RWPE1 (cell line): ENCODE measurements at regions of chr9 and their contacts with region 1.

Region 1: GRCh38 chr9:132507746-132508469 is 74.5 kb upstream of the BARHL1 start:
- DNase-seq: peak; percentile 95
- H3K27ac ChIP-seq: no peak overlapping the region
- CTCF ChIP-seq: peak; percentile 96

Region 2: DNA sequence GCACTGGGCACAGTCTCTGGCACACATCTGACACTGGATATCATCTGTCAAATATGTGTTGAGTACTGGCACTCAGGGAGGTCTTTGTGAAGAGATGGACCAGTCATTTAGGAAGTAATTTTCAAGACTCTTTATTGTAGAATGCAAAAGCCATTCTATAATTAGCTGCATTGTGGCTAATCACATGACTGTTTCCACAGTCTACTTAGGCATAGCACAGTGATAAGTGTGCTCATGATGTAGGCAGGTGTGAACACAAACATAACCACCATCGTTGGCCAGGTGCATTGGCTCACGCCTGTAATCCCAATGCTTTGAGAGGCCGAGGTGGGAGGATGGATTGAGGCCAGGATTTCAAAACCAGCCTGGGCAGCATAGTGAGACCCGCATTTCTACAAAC is 35.7 kb before region 1 on chr9:
- CTCF ChIA-PET with region 1: no interaction called
- POLR2A ChIA-PET with region 1: no interaction called
- DNase-seq: no peak
- H3K27ac ChIP-seq: no peak overlapping the region
- CTCF ChIP-seq: no peak

Region 3: DNA sequence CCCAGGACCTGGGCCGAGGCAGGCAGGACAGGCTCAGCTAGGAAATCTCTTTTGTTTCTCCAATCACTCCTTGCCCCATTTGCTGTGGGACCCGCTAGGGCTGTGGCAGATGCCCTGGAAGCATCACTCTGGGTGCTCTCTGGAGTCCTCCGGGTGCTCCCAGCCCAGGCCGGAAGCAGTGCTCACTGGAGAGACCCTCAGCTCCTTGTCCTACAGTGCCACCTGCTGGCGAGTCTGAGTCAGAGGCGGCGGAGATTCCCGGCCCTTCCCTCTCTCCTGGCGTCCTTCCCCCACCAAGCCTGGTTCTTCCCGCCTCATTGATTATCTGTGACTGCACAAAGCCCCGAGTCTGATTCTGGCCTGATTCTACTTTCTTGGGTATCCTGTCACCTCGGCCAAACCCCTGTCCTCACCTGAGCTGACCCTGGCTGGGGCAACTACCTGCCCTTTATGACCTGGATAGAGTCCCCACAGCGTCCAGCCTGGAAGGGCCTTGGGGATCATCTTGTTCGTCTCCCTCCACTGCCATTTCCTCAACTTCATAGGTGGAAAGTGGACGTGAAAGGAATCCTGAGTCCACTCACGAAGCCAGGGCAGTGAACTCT is 67.2 kb after region 1 on chr9:
- CTCF ChIA-PET with region 1: interaction called, 30 read pairs
- POLR2A ChIA-PET with region 1: no interaction called
- DNase-seq: peak; percentile 87
- H3K27ac ChIP-seq: no peak overlapping the region
- CTCF ChIP-seq: peak; percentile 92

Region 4: GRCh38 chr9:132694157-132694556 is 186.2 kb after region 1 on chr9:
- CTCF ChIA-PET with region 1: no interaction called
- POLR2A ChIA-PET with region 1: no interaction called
- DNase-seq: no peak
- H3K27ac ChIP-seq: no peak overlapping the region
- CTCF ChIP-seq: no peak

Region 5: DNA sequence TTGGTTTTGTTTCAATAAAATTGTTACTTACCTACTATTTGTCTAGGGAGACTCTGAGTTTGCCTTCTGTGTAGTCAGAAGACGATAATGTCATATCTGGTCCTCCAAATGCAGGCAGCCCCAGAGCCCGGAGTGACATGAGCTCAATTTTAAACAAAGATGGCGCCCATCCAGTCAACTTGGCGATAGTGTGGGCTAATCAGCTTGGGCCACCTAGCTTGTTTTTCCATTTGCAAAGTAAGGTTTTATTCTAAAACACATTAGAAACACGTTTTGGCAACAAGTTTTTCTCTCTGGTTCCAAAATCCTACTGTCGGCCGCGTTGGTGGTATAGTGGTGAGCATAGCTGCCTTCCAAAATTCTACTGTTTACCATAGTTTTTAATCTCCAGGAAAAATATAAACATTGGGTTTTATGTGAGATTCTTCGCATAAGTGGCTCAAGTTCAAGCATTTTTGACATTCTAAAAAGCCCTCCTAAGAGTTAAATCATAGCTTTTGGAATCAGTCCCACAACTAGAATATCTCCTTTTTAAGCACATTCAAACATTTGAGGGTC is 423.3 kb after region 1 on chr9:
- CTCF ChIA-PET with region 1: interaction called, 11 read pairs
- POLR2A ChIA-PET with region 1: no interaction called
- DNase-seq: no peak
- H3K27ac ChIP-seq: no peak overlapping the region
- CTCF ChIP-seq: no peak